Caco-2 (cell line): ENCODE measurements at regions of chr16 and their contacts with region 1.

Region 1: DNA sequence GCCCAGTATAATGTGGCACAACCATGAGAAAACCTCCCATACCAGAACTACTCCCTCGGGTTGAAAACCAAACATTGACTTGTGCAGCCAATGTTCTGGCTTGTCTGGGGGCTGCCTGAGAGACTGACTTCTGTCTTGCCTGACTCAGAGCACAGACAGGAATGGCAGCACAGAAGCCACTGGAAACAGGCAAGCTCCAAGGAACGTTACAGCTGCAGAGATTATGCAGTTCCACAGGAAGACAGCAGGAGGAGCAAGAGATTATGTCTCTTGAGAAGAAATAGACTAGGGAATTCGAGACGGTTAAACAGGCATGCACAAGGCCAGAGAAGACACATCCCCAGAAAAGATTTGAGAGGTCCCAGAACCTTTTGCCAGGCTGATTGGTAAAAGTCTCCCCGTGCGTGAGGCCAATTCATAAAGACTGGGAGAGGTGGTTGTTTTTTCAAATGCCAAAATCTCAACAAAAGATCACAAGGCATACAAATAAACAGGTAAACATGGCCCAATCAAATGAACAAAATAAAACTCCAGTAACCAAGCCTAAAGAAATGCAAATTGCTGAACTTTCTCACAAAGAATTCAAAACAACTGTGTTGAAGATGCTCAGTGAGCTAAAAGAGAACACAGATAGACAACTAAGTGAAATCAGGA is 90.6 kb upstream of the CDH5 start:
- DNase-seq: peak; percentile 60 to 71
- H3K4me3 ChIP-seq: no peak overlapping the region
- H3K4me3 Mint-ChIP-seq: no peak overlapping the region
- H3K27ac Mint-ChIP-seq: no peak overlapping the region
- H3K4me1 ChIP-seq: peaks cover 18% of the 10 kb centered on the region
- H3K4me1 Mint-ChIP-seq: peaks cover 25% of the 10 kb centered on the region
- H3K27me3 ChIP-seq: no peaks in the 10 kb centered on the region
- H3K27me3 Mint-ChIP-seq: peaks cover 5% of the 10 kb centered on the region
- CTCF ChIP-seq: peak; percentile 61 to 62

Region 2: GRCh38 chr16:66315210-66315825 is 39.4 kb after region 1 on chr16:
- CTCF ChIA-PET with region 1: interaction called, 9 read pairs
- POLR2A ChIA-PET with region 1: no interaction called
- intact Hi-C with region 1: loop called (anchors 1 kb)
- DNase-seq: peak; percentile 78 to 83
- H3K4me3 ChIP-seq: no peak overlapping the region
- H3K4me3 Mint-ChIP-seq: no peak overlapping the region
- H3K27ac Mint-ChIP-seq: no peak overlapping the region
- H3K4me1 ChIP-seq: peaks cover 3% of the 10 kb centered on the region; the same call in 1 of the 2 replicates
- H3K4me1 Mint-ChIP-seq: no peaks in the 10 kb centered on the region
- H3K27me3 ChIP-seq: peaks cover 2% of the 10 kb centered on the region; the same call in 1 of the 2 replicates
- H3K27me3 Mint-ChIP-seq: peaks cover 5% of the 10 kb centered on the region
- CTCF ChIP-seq: peak; percentile 97 to 99

Region 3: DNA sequence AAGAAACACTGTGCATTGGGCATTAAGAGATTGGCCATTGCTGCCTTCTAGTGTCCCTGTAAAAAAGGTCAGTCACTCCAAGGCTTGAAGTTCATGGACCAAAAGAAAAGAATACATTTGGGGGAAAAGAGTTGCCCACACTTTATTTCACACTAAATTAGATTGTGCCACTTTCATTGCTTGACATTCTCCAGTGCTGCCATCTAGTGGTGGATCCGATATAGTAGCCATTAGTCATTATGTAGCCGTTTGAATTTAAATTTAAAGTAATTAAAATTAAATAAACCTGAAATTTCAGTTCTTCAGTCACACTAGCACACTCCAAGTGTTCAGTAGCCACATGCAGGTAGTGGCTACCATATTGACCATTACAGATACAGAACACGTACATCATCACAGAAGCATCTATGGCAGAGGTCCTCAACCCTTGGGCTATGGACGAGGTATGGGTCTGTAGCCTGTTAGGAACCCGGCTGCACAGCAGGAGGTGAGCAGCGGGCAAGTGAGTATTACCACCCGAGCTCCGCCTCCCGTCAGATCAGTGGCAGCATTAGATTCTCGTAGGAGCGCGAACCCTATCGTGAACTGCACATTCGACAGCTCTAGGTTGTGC is 68.7 kb after region 1 on chr16:
- CTCF ChIA-PET with region 1: interaction called, 4 read pairs
- POLR2A ChIA-PET with region 1: no interaction called
- intact Hi-C with region 1: loop called (anchors 1 kb)
- DNase-seq: peak in 1 of 2 experiments; percentile 55
- H3K4me3 ChIP-seq: no peak overlapping the region
- H3K4me3 Mint-ChIP-seq: no peak overlapping the region
- H3K27ac Mint-ChIP-seq: no peak overlapping the region
- H3K4me1 ChIP-seq: no peaks in the 10 kb centered on the region
- H3K4me1 Mint-ChIP-seq: no peaks in the 10 kb centered on the region
- H3K27me3 ChIP-seq: no peaks in the 10 kb centered on the region
- H3K27me3 Mint-ChIP-seq: no peaks in the 10 kb centered on the region
- CTCF ChIP-seq: peak; percentile 69 to 78